GM12878 (cell line): ENCODE measurements at regions of chr11 and their contacts with region 1.

Region 1: GRCh38 chr11:73350908-73351636 is 25.1 kb upstream of the RELT start:
- DNase-seq: no peak
- ATAC-seq: peak; percentile 89
- H3K4me3 ChIP-seq: no peak overlapping the region
- H3K27ac ChIP-seq: no peak overlapping the region
- H3K4me1 ChIP-seq: no peaks in the 10 kb centered on the region
- H3K27me3 ChIP-seq: no peaks in the 10 kb centered on the region
- CTCF ChIP-seq: peak; percentile 94 to 99 (median 97)
- EP300 ChIP-seq: no peak
- POLR2A ChIP-seq: no peak
- RAD21 ChIP-seq: peak; percentile 96

Region 2: DNA sequence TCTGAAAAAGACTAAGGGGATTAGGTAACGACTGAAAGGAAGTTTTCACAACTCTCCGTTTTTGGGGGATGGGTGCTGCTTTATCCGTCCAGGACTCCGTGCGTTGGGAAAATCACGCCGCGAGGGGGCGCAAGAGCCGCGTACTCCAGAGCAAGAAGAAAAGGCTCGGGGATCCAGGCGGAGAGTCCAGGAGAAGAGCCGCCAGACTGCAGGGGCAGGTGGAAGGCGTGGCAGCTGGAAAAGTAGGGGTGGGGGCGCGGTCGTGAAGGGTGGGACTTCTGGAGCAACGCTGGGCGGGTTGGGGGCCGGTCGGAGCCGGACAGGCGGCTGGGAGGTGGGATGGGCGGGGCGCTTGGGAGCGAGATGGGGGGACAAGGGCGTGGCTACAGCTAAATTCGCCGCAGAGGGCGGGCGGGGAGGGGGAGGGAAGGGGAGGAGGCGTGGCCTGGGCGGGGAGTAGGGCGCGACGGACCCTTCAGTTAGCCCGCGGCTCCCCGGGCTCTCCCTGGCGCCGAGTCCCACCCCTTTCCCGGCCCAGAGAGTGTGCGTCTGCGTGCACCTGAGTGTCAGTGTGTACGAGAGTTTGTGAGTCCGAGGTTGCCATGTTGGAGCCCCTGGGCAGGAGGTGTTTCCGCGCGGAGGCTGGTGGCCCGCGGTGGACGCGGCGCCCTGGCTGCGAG is 43.6 kb before region 1 on chr11:
- CTCF ChIA-PET with region 1: interaction called, 14 read pairs
- POLR2A ChIA-PET with region 1: interaction called, 4 read pairs
- RAD21 ChIA-PET with region 1: interaction called, 11 read pairs
- SMC1A ChIA-PET with region 1: interaction called, 14 read pairs
- in situ Hi-C with region 1: no loop called
- intact Hi-C with region 1: no loop called
- DNase-seq: peak; percentile 75
- ATAC-seq: peak; percentile 85
- H3K4me3 ChIP-seq: peak overlapping the region; percentile 76
- H3K27ac ChIP-seq: peak overlapping the region; percentile 69
- H3K4me1 ChIP-seq: peaks cover 7% of the 10 kb centered on the region; the same call in 1 of the 2 replicates
- H3K27me3 ChIP-seq: no peaks in the 10 kb centered on the region
- CTCF ChIP-seq: peak; percentile 81 to 95 (median 83)
- EP300 ChIP-seq: no peak
- POLR2A ChIP-seq: peak; percentile 77
- RAD21 ChIP-seq: peak; percentile 94

Region 3: GRCh38 chr11:73335204-73335923 is 15.7 kb before region 1 on chr11:
- CTCF ChIA-PET with region 1: interaction called, 30 read pairs
- POLR2A ChIA-PET with region 1: no interaction called
- RAD21 ChIA-PET with region 1: interaction called, 10 read pairs
- SMC1A ChIA-PET with region 1: no interaction called
- in situ Hi-C with region 1: no loop called
- intact Hi-C with region 1: no loop called
- DNase-seq: no peak
- ATAC-seq: peak; percentile 78
- H3K4me3 ChIP-seq: no peak overlapping the region
- H3K27ac ChIP-seq: 0 out of 2 replicates have a peak overlapping the region, but pooled peaks have one; percentile 40
- H3K4me1 ChIP-seq: peaks cover 14% of the 10 kb centered on the region
- H3K27me3 ChIP-seq: no peaks in the 10 kb centered on the region
- CTCF ChIP-seq: peak; percentile 98 to 99 (median 98); a peak in 5 of 6 replicates
- EP300 ChIP-seq: 0 out of 4 replicates have a peak, but pooled peaks of 1 of the 2 experiments have one; percentile 8
- POLR2A ChIP-seq: no peak
- RAD21 ChIP-seq: peak; percentile 100

Region 4: GRCh38 chr11:73384872-73385689 is 34.0 kb after region 1 on chr11:
- CTCF ChIA-PET with region 1: interaction called, 400 read pairs
- POLR2A ChIA-PET with region 1: no interaction called
- RAD21 ChIA-PET with region 1: interaction called, 13 read pairs
- SMC1A ChIA-PET with region 1: interaction called, 10 read pairs
- in situ Hi-C with region 1: no loop called
- intact Hi-C with region 1: no loop called
- DNase-seq: peak; percentile 69
- ATAC-seq: peak; percentile 73
- H3K4me3 ChIP-seq: peak overlapping the region; percentile 66
- H3K27ac ChIP-seq: peak overlapping the region; percentile 95
- H3K4me1 ChIP-seq: peaks cover 85% of the 10 kb centered on the region
- H3K27me3 ChIP-seq: no peaks in the 10 kb centered on the region
- CTCF ChIP-seq: no peak
- EP300 ChIP-seq: peak; percentile 11 to 67; a peak in 3 of 4 replicates
- POLR2A ChIP-seq: no peak
- RAD21 ChIP-seq: no peak

Region 5: DNA sequence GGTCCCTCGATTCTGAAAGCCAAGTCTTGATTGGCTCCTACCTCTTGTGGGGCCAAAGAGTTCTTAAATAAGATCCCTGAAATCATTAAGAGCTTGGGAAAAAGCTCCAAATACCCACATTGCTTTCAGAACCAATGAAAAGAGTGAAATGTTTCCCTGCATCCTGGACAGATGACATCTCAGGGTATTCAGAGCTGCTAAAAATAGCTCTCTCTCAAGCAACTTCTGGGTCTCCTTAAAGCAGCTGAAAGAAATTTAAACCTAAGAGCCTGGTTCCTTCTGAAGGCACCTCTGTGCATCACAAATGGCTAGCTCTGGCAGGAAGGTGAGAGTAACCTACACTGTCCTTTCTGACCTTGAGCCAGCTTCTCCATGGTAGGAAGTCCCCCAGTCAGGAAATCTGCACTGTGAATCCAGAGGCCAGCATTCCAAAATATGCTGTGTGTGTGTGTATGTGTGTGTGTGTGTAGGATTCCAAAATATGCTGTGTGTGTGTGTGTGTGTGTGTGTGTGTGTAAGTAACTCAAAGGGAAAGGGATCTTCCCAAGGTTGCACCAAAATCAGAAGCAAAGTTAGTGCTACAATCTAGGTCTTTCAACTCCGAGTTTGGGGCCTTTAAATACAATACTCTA is 75.3 kb after region 1 on chr11:
- CTCF ChIA-PET with region 1: interaction called, 29 read pairs
- POLR2A ChIA-PET with region 1: no interaction called
- RAD21 ChIA-PET with region 1: no interaction called
- SMC1A ChIA-PET with region 1: interaction called, 4 read pairs
- in situ Hi-C with region 1: no loop called
- intact Hi-C with region 1: no loop called
- DNase-seq: no peak
- ATAC-seq: no peak
- H3K4me3 ChIP-seq: no peak overlapping the region
- H3K27ac ChIP-seq: no peak overlapping the region
- H3K4me1 ChIP-seq: peaks cover 3% of the 10 kb centered on the region; the same call in 1 of the 2 replicates
- H3K27me3 ChIP-seq: no peaks in the 10 kb centered on the region
- CTCF ChIP-seq: no peak
- EP300 ChIP-seq: no peak
- POLR2A ChIP-seq: no peak
- RAD21 ChIP-seq: no peak